PC-9 (cell line): ENCODE measurements at regions of chr12 and their contacts with region 1.

Region 1: DNA sequence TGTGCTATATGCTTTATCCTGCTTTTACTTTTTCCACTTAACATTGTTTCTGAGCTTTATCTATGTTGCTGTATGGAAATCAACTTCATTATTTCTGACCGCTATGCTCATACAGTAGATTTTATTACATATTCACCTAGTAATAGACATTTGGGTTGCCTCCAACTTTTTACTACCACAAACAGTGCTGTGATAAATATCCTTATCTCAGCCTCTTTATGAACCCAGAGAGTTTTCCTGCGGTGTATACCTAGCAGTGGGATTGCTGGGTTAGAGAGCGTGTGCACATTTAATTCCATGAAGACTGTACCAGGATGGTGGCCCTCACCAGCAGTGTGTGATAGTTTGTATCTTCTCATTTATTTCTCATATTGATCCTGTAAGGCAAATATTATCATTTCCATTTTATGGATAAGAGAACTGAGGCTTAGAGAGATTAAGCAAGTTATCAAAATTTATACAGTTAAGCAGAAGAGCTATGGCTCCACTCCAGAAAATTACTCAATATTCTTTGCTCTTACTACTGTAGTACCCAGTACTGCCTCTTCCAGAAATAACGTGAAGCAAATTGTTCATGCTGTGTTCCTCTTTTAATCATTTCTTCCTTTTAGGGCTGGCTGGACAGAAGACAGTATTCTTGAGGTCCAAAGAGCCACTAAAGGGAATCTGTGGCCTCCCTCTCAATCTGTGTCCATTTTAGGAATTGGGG is 26.3 kb upstream of the CISTR start:
- DNase-seq: no peak
- H3K4me3 ChIP-seq: no peak overlapping the region
- H3K27ac ChIP-seq: no peak overlapping the region
- H3K4me1 ChIP-seq: peaks cover 7% of the 10 kb centered on the region
- H3K27me3 ChIP-seq: no peaks in the 10 kb centered on the region
- CTCF ChIP-seq: no peak

Region 2: GRCh38 chr12:53805127-53805466 is 27.0 kb after region 1 on chr12:
- CTCF ChIA-PET with region 1: no interaction called
- POLR2A ChIA-PET with region 1: interaction called, 10 read pairs
- intact Hi-C with region 1: no loop called
- DNase-seq: peak in 1 of 2 experiments; percentile 78
- H3K4me3 ChIP-seq: peak overlapping the region; percentile 32; the same call in 1 of the 2 replicates
- H3K27ac ChIP-seq: peak overlapping the region; percentile 96
- H3K4me1 ChIP-seq: peaks cover 74% of the 10 kb centered on the region
- H3K27me3 ChIP-seq: no peaks in the 10 kb centered on the region
- CTCF ChIP-seq: no peak

Region 3: DNA sequence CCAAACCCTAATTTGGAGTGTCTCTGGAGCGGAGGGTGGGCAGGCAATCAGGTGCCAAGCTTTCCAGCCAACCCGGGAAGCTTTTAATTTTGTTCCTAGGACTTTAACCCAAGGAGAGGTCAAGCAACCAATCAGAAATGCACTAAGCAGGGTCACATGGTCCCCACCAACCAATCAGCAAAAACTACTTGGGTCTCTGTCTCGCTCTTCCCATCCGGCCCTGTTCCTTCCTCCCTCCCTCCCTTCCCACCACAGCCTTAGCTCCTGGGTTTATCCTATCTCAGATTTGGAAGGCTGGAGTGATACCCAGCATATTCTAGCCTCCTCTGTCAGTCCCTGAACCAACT is 262.0 kb after region 1 on chr12:
- CTCF ChIA-PET with region 1: no interaction called
- POLR2A ChIA-PET with region 1: no interaction called
- intact Hi-C with region 1: no loop called
- DNase-seq: no peak
- H3K4me3 ChIP-seq: no peak overlapping the region
- H3K27ac ChIP-seq: no peak overlapping the region
- H3K4me1 ChIP-seq: no peaks in the 10 kb centered on the region
- H3K27me3 ChIP-seq: peaks cover 31% of the 10 kb centered on the region
- CTCF ChIP-seq: no peak